Posterior cingulate gyrus (tissue), 11 donors: ENCODE measurements at regions of chr10 and their contacts with region 1.

Region 1: GRCh38 chr10:58963101-58963534 is 213.3 kb upstream of the PHYHIPL start:
- DNase-seq: peak in 5 of 10 donors; percentile 17 to 79 (median 64)

Region 2: GRCh38 chr10:58992830-58993460 is 29.8 kb after region 1 on chr10:
- intact Hi-C with region 1: loop called (anchors 1 kb)
- DNase-seq: no peak

Region 3: DNA sequence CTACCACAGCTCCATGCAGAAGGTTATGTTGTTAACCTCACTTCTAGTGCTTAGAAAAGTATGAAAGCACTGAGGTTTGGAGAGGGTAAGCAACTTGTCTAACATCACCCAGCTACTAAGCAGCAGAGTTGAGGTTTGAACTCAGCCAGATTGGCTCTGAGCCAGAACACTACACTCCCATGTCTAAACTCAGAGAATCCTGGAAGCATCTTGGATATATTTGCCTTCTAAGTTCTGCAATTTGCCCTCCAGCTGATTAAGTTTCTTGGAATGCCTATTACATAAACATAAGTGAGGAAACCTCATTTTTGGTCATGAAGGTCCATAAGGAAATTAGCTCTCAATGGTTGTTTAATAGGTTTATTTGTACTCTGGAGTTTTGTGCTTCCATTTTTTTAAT is 135.3 kb after region 1 on chr10:
- intact Hi-C with region 1: loop called (anchors 5 kb)
- DNase-seq: no peak